ENCODE measurements at regions of chr1 and their contacts with region 1.

Region 1: GRCh38 chr1:116151739-116152576 is 40.8 kb downstream of the MAB21L3 start:
- DNase-seq: peak; percentile 78
- H3K4me3 ChIP-seq: peak overlapping the region; percentile 34 to 42 (median 37)
- H3K27ac ChIP-seq: peak overlapping the region; percentile 84
- H3K4me1 ChIP-seq: peaks cover 16% of the 10 kb centered on the region
- H3K27me3 ChIP-seq: peaks cover 5 to 9% of the 10 kb centered on the region in 2 experiments
- CTCF ChIP-seq: peak; percentile 88 to 90
- POLR2A ChIP-seq: no peak

Region 2: DNA sequence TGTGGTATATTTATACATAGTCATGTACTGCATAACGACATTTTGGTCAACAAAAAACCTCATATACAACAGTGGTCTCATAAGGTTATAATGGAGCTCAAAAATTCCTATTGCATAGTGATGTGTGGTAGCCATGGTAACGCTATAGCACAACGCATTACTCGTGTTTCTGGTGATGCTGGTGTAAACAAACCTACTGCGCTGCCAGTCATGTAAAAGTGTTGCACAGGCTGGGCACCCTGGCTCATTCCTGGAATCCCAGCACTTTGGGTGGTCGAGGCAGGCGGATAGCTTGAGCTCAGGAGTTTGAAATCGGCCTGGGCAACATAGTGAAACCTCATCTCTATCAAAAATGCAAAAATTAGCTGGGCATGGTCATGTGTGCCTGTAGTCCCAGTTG is 258.3 kb before region 1 on chr1:
- CTCF ChIA-PET with region 1: no interaction called
- POLR2A ChIA-PET with region 1: no interaction called
- dilution Hi-C with region 1: no loop called
- intact Hi-C with region 1: no loop called
- DNase-seq: no peak
- H3K4me3 ChIP-seq: no peak overlapping the region
- H3K27ac ChIP-seq: no peak overlapping the region
- H3K4me1 ChIP-seq: no peaks in the 10 kb centered on the region
- H3K27me3 ChIP-seq: no peaks in the 10 kb centered on the region
- CTCF ChIP-seq: no peak
- POLR2A ChIP-seq: no peak

Region 3: DNA sequence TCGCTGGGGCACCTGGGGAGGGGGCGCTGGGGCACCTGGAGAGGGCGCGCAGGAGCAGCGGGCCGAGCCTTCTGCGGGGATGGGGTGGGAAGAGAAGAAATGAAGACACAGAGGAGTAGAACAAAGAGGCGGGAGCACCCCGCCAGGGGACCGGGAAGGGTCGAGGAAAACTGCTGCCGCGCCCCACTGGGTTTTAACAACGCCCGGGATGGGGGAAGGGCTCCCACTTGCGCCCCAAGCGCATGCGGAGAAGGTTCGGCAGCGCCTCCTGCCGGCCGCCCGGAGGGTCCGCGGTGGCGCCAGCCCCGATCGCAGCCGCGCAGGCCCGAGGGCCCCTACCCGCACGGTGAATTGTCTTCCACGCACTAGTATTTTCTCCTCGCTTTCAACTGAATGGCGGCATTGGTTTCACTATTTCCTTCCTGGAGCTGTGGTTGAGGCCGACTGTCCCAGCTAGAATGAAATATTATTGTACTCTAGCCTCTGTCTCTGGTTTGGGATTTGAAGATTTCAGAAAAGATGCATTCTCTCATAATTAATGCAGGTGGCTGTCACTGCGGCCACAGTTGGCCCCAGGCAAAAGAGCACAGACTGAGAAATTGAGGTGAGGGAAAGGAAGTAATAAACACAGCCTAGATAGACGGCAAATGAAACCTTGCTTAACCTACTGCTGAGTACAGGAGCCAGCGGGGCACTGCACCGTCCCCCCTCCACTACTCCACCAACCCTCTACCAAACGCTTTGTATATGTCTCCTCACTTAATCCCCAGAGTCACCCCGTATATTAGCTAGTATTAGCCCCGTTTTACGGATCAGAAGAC is 16.5 kb after region 1 on chr1:
- CTCF ChIA-PET with region 1: interaction called, 7 read pairs
- POLR2A ChIA-PET with region 1: no interaction called
- dilution Hi-C with region 1: no loop called
- intact Hi-C with region 1: loop called (anchors 1 kb)
- DNase-seq: peak; percentile 53
- H3K4me3 ChIP-seq: peak overlapping the region in 2 of 3 experiments; percentile 13 to 49
- H3K27ac ChIP-seq: no peak overlapping the region
- H3K4me1 ChIP-seq: no peaks in the 10 kb centered on the region
- H3K27me3 ChIP-seq: peaks cover 5 to 14% of the 10 kb centered on the region in 2 experiments
- CTCF ChIP-seq: peak; percentile 94 to 95
- POLR2A ChIP-seq: no peak